ENCODE measurements at regions of chr2 and their contacts with region 1.

Region 1: GRCh38 chr2:101823347-101823791 is 125.9 kb downstream of the MAP4K4 start:
- DNase-seq: peak; percentile 86
- ATAC-seq: peak; percentile 86
- H3K4me3 Mint-ChIP-seq: peak overlapping the region; percentile 29
- H3K27ac Mint-ChIP-seq: peak overlapping the region; percentile 75
- H3K4me1 Mint-ChIP-seq: peaks cover 76% of the 10 kb centered on the region
- H3K27me3 Mint-ChIP-seq: no peaks in the 10 kb centered on the region
- CTCF ChIP-seq: peak; percentile 81

Region 2: DNA sequence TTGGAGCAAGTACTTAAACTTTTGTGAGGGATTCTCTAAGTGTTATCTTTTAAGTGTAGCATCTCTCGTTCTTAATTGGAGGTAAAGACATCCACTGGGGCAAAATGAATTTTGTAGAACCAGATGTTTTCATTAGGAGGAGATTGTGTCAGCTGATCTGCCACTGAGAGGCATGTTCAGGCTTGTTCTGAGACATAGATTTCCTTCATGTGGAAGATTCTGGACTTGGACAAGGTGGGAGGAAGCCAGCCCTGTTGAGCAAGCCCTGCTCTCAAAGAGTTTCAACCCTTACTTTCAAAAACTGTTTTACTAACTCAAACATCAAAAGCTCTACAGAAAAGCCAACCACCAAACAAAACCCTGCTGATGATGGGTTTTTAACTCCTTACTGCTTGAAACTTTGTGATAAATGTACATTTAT is 119.3 kb before region 1 on chr2:
- CTCF ChIA-PET with region 1: interaction called, 8 read pairs
- POLR2A ChIA-PET with region 1: no interaction called
- intact Hi-C with region 1: loop called (anchors 5 kb)
- DNase-seq: no peak
- ATAC-seq: peak; percentile 6
- H3K4me3 Mint-ChIP-seq: peak overlapping the region; percentile 48
- H3K27ac Mint-ChIP-seq: peak overlapping the region; percentile 80
- H3K4me1 Mint-ChIP-seq: peaks cover 70% of the 10 kb centered on the region
- H3K27me3 Mint-ChIP-seq: no peaks in the 10 kb centered on the region
- CTCF ChIP-seq: no peak

Region 3: DNA sequence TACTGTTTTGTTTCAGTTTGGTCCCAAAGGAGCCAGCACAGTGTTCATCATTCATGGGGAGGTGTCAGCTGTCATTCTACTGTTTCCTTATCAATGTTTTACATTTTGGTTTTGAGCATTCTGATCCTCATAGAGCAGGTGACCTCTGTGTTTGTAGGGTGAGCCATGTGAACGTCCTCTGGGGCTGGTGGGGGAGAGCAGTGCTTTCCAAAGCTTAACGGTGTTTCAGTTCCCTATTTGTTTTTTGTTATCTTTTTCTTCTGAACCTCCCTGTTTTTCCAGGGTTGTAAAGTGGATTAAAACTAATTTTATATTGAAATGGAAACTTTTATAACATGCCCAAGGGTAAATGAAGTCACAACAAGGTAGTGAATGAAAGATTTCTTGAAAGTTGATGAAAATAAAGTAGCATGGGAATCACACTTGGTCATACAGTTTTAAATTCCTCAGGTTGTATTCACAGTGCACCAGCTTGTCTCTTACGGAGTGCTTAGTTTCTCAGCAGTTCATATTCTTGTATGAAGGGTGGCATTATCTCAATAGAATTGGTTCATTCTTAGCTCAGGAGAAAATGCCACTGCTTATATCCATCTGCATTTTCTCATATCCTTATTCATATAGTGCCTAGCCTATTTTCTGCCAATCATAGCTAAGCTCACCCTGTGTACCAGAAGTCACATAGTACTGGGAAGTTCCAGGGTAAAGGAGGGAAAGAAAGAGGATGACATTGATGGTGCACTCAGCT is 71.3 kb before region 1 on chr2:
- CTCF ChIA-PET with region 1: interaction called, 6 read pairs
- POLR2A ChIA-PET with region 1: interaction called, 3 read pairs
- intact Hi-C with region 1: loop called (anchors 5 kb)
- DNase-seq: no peak
- ATAC-seq: no peak
- H3K4me3 Mint-ChIP-seq: no peak overlapping the region
- H3K27ac Mint-ChIP-seq: no peak overlapping the region
- H3K4me1 Mint-ChIP-seq: peaks cover 67% of the 10 kb centered on the region
- H3K27me3 Mint-ChIP-seq: no peaks in the 10 kb centered on the region
- CTCF ChIP-seq: no peak

Region 4: DNA sequence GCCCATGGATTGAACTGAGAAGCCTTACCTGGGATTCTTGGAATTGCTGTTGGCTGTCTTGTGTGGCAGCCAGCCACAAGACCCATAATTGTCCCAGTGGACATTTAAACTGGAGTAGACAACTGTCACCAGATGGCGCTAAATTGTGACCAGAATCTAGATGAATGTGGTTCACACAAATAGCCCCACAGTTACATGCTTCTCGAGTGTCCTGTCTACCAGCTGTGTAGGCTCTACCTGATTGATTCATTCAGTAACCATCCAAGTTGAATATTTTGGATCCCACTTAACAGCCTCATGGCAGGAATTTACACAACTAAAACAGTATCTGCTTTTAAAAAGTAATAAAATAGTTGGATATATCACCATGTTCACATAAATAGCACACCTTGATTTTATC is 52.6 kb before region 1 on chr2:
- CTCF ChIA-PET with region 1: interaction called, 11 read pairs
- POLR2A ChIA-PET with region 1: interaction called, 3 read pairs
- intact Hi-C with region 1: loop called (anchors 10 kb)
- DNase-seq: peak; percentile 49
- ATAC-seq: peak; percentile 31
- H3K4me3 Mint-ChIP-seq: no peak overlapping the region
- H3K27ac Mint-ChIP-seq: no peak overlapping the region
- H3K4me1 Mint-ChIP-seq: peaks cover 82% of the 10 kb centered on the region
- H3K27me3 Mint-ChIP-seq: no peaks in the 10 kb centered on the region
- CTCF ChIP-seq: peak; percentile 47

Region 5: DNA sequence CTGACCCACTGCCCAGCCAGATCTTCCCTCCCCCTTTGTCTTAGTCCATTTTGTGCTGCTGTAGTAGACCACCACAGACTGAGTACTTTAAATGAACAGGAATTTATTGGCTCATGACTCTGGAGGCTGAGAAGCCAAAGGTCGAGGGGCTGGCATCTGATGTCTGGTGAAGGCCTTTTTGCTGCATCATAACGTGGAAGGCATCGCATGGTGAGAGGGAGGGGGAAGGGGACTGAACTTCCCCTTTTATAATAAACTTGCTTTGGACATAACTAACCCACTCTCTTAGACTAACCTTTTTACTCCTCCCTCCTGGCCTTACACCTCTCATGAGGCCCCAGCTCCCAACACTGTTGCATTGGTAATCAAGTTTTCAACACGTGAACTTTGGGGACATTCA is 42.0 kb before region 1 on chr2:
- CTCF ChIA-PET with region 1: interaction called, 12 read pairs
- POLR2A ChIA-PET with region 1: no interaction called
- intact Hi-C with region 1: loop called (anchors 10 kb)
- DNase-seq: no peak
- ATAC-seq: peak; percentile 22
- H3K4me3 Mint-ChIP-seq: no peak overlapping the region
- H3K27ac Mint-ChIP-seq: peak overlapping the region; percentile 14
- H3K4me1 Mint-ChIP-seq: peaks cover 74% of the 10 kb centered on the region
- H3K27me3 Mint-ChIP-seq: no peaks in the 10 kb centered on the region
- CTCF ChIP-seq: no peak

Region 6: GRCh38 chr2:101796825-101797600 is 26.4 kb before region 1 on chr2:
- CTCF ChIA-PET with region 1: interaction called, 10 read pairs
- POLR2A ChIA-PET with region 1: no interaction called
- intact Hi-C with region 1: no loop called
- DNase-seq: no peak
- ATAC-seq: no peak
- H3K4me3 Mint-ChIP-seq: no peak overlapping the region
- H3K27ac Mint-ChIP-seq: peak overlapping the region; percentile 24
- H3K4me1 Mint-ChIP-seq: peaks cover 42% of the 10 kb centered on the region
- H3K27me3 Mint-ChIP-seq: no peaks in the 10 kb centered on the region
- CTCF ChIP-seq: no peak

Region 7: GRCh38 chr2:101972621-101973434 is 149.5 kb after region 1 on chr2:
- CTCF ChIA-PET with region 1: no interaction called
- POLR2A ChIA-PET with region 1: no interaction called
- intact Hi-C with region 1: no loop called
- DNase-seq: no peak
- ATAC-seq: no peak
- H3K4me3 Mint-ChIP-seq: no peak overlapping the region
- H3K27ac Mint-ChIP-seq: no peak overlapping the region
- H3K4me1 Mint-ChIP-seq: no peaks in the 10 kb centered on the region
- H3K27me3 Mint-ChIP-seq: no peaks in the 10 kb centered on the region
- CTCF ChIP-seq: no peak

Region 8: GRCh38 chr2:102033031-102033749 is 209.8 kb after region 1 on chr2:
- CTCF ChIA-PET with region 1: no interaction called
- POLR2A ChIA-PET with region 1: no interaction called
- intact Hi-C with region 1: no loop called
- DNase-seq: peak; percentile 25
- ATAC-seq: peak; percentile 62
- H3K4me3 Mint-ChIP-seq: no peak overlapping the region
- H3K27ac Mint-ChIP-seq: peak overlapping the region; percentile 47
- H3K4me1 Mint-ChIP-seq: peaks cover 37% of the 10 kb centered on the region
- H3K27me3 Mint-ChIP-seq: no peaks in the 10 kb centered on the region
- CTCF ChIP-seq: no peak

Region 9: GRCh38 chr2:102187496-102188150 is 364.3 kb after region 1 on chr2:
- CTCF ChIA-PET with region 1: no interaction called
- POLR2A ChIA-PET with region 1: no interaction called
- intact Hi-C with region 1: no loop called
- DNase-seq: peak; percentile 54
- ATAC-seq: peak; percentile 71
- H3K4me3 Mint-ChIP-seq: peak overlapping the region; percentile 68
- H3K27ac Mint-ChIP-seq: peak overlapping the region; percentile 71
- H3K4me1 Mint-ChIP-seq: peaks cover 14% of the 10 kb centered on the region
- H3K27me3 Mint-ChIP-seq: peaks cover 13% of the 10 kb centered on the region
- CTCF ChIP-seq: no peak